Caco-2 (cell line): ENCODE measurements at regions of chr5 and their contacts with region 1.

Region 1: GRCh38 chr5:60668686-60669304 is 31.2 kb downstream of the DEPDC1B start:
- DNase-seq: peak in 1 of 2 experiments; percentile 38
- H3K4me3 ChIP-seq: no peak overlapping the region
- H3K4me3 Mint-ChIP-seq: no peak overlapping the region
- H3K27ac Mint-ChIP-seq: no peak overlapping the region
- H3K4me1 ChIP-seq: peaks cover 39% of the 10 kb centered on the region
- H3K4me1 Mint-ChIP-seq: peaks cover 33% of the 10 kb centered on the region
- H3K27me3 ChIP-seq: no peaks in the 10 kb centered on the region
- H3K27me3 Mint-ChIP-seq: no peaks in the 10 kb centered on the region
- CTCF ChIP-seq: peak; percentile 45 to 50

Region 2: GRCh38 chr5:60295423-60295822 is 373.4 kb before region 1 on chr5:
- CTCF ChIA-PET with region 1: no interaction called
- POLR2A ChIA-PET with region 1: no interaction called
- intact Hi-C with region 1: loop called (anchors 5 kb)
- DNase-seq: peak; percentile 39 to 40
- H3K4me3 ChIP-seq: no peak overlapping the region
- H3K4me3 Mint-ChIP-seq: no peak overlapping the region
- H3K27ac Mint-ChIP-seq: no peak overlapping the region
- H3K4me1 ChIP-seq: no peaks in the 10 kb centered on the region
- H3K4me1 Mint-ChIP-seq: no peaks in the 10 kb centered on the region
- H3K27me3 ChIP-seq: no peaks in the 10 kb centered on the region
- H3K27me3 Mint-ChIP-seq: no peaks in the 10 kb centered on the region
- CTCF ChIP-seq: peak; percentile 61 to 70

Region 3: DNA sequence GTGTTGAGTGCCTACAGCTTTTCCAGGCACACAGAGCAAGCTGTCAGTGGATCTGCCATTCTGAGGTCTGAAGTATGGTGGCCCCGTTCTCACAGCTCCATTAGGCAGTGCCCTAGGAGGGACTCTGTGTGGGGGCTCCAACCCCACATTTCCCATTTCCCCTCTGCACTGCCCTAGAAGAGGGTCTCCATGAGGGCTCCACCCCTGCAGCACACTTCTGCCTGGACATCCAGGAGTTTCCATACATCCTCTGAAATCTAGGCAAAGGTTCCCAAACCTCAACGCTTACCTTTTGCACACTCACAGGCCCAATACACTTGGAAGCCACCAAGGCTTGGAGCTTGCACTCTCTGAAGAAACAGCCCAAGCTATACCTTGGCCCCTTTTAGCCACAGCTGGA is 100.1 kb before region 1 on chr5:
- CTCF ChIA-PET with region 1: no interaction called
- POLR2A ChIA-PET with region 1: no interaction called
- intact Hi-C with region 1: no loop called
- DNase-seq: peak in 1 of 2 experiments; percentile 10
- H3K4me3 ChIP-seq: no peak overlapping the region
- H3K4me3 Mint-ChIP-seq: no peak overlapping the region
- H3K27ac Mint-ChIP-seq: no peak overlapping the region
- H3K4me1 ChIP-seq: no peaks in the 10 kb centered on the region
- H3K4me1 Mint-ChIP-seq: no peaks in the 10 kb centered on the region
- H3K27me3 ChIP-seq: no peaks in the 10 kb centered on the region
- H3K27me3 Mint-ChIP-seq: no peaks in the 10 kb centered on the region
- CTCF ChIP-seq: no peak

Region 4: GRCh38 chr5:60687927-60688720 is 19.3 kb after region 1 on chr5:
- CTCF ChIA-PET with region 1: interaction called, 5 read pairs
- POLR2A ChIA-PET with region 1: no interaction called
- intact Hi-C with region 1: loop called (anchors 1 kb)
- DNase-seq: peak; percentile 65 to 67
- H3K4me3 ChIP-seq: no peak overlapping the region
- H3K4me3 Mint-ChIP-seq: no peak overlapping the region
- H3K27ac Mint-ChIP-seq: peak overlapping the region; percentile 53
- H3K4me1 ChIP-seq: peaks cover 36% of the 10 kb centered on the region
- H3K4me1 Mint-ChIP-seq: peaks cover 47% of the 10 kb centered on the region
- H3K27me3 ChIP-seq: no peaks in the 10 kb centered on the region
- H3K27me3 Mint-ChIP-seq: no peaks in the 10 kb centered on the region
- CTCF ChIP-seq: peak; percentile 41 to 57

Region 5: DNA sequence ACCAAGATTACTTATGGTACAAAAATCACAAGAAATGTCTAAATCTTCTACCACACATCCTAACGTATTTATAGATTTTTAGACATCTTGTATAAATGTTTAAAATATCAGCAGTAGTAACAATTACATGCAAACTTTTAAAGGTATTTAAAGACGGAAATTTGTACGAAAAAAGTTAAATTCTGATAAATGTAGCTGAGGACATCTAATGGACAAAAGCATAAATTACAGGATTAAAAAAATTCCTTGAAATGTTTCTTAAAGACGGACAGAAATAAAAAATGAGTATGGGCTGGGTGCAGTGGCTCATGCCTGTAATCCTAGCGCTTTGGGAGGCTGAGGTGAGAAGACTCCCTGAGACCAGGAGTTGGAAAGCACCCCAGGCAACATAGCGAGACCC is 260.2 kb after region 1 on chr5:
- CTCF ChIA-PET with region 1: no interaction called
- POLR2A ChIA-PET with region 1: no interaction called
- intact Hi-C with region 1: loop called (anchors 2 kb)
- DNase-seq: no peak
- H3K4me3 ChIP-seq: no peak overlapping the region
- H3K4me3 Mint-ChIP-seq: no peak overlapping the region
- H3K27ac Mint-ChIP-seq: no peak overlapping the region
- H3K4me1 ChIP-seq: no peaks in the 10 kb centered on the region
- H3K4me1 Mint-ChIP-seq: no peaks in the 10 kb centered on the region
- H3K27me3 ChIP-seq: no peaks in the 10 kb centered on the region
- H3K27me3 Mint-ChIP-seq: no peaks in the 10 kb centered on the region
- CTCF ChIP-seq: peak; percentile 20

Region 6: DNA sequence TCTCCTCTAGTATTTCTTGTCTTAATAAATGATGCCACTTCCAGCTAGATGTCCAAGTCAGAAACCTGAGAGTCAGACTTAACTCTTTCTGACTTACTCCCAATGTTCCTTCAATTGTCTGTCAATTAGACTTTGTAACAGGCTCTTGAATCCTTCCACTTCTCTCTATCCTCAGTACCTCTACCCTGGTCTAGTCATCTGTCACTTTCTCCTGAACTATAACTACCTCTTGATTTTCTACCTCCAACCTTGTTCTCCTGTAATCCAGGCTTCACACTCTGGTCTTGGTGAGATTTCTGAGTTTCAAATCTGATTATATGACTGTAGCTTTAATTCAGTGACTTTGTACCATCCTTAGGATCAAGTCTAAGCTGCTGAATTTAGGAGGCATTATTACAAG is 341.1 kb after region 1 on chr5:
- CTCF ChIA-PET with region 1: no interaction called
- POLR2A ChIA-PET with region 1: no interaction called
- intact Hi-C with region 1: loop called (anchors 2 kb)
- DNase-seq: no peak
- H3K4me3 ChIP-seq: no peak overlapping the region
- H3K4me3 Mint-ChIP-seq: no peak overlapping the region
- H3K27ac Mint-ChIP-seq: no peak overlapping the region
- H3K4me1 ChIP-seq: peaks cover 22% of the 10 kb centered on the region
- H3K4me1 Mint-ChIP-seq: peaks cover 7% of the 10 kb centered on the region
- H3K27me3 ChIP-seq: no peaks in the 10 kb centered on the region
- H3K27me3 Mint-ChIP-seq: no peaks in the 10 kb centered on the region
- CTCF ChIP-seq: no peak